GM12878 (cell line): ENCODE measurements at regions of chr13 and their contacts with region 1.

Region 1: GRCh38 chr13:27620377-27621115 is at the start of gene LNX2:
- DNase-seq: peak; percentile 80
- ATAC-seq: peak; percentile 94
- H3K4me3 ChIP-seq: peak within 1 kb of the TSS; percentile 97
- H3K27ac ChIP-seq: peak within 1 kb of the TSS; percentile 84
- H3K4me1 ChIP-seq: peaks cover 8% of the 10 kb centered on the region
- H3K27me3 ChIP-seq: no peaks in the 10 kb centered on the region
- CTCF ChIP-seq: no peak
- EP300 ChIP-seq: no peak
- POLR2A ChIP-seq: peak; percentile 90
- RAD21 ChIP-seq: no peak
- polyA plus RNA-seq, gene LNX2: 1.3 to 1.9 TPM

Region 2: DNA sequence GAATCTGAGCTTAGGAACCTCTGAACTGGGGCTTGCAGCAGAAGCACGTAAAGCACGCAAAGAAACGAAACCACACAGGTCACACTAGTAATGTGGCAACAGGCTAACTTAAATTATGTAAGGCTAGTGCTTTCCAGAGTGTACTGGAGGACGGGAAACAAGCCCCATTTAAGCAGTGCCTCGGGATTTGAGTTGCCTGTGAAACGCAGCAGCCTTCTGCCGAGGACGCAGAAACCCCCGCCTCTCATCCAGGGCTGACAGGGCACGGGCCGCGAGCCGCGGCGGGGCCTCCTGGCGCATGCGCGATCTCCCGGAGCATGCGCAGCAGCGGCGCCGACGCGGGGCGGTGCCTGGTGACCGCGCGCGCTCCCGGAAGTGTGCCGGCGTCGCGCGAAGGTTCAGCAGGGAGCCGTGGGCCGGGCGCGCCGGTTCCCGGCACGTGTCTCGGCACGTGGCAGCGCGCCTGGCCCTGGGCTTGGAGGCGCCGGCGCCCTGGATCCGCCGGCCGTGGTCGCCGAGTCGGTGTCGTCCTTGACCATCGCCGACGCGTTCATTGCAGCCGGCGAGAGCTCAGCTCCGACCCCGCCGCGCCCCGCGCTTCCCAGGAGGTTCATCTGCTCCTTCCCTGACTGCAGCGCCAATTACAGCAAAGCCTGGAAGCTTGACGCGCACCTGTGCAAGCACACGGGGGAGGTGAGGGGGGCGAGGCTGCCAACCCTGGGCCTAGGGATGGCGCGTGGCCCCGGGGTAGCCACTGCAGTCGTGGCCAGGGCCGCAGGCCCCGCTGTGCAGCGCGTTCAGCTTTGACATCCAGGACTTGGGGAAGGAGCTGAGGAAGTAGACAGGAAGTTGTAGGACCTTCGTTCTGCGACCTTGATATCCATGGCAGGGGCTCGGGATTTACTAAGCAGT is 196.0 kb before region 1 on chr13 and contains the start of gene GTF3A:
- CTCF ChIA-PET with region 1: interaction called, 3 read pairs
- POLR2A ChIA-PET with region 1: interaction called, 3 read pairs
- RAD21 ChIA-PET with region 1: interaction called, 6 read pairs
- SMC1A ChIA-PET with region 1: no interaction called
- in situ Hi-C with region 1: no loop called
- intact Hi-C with region 1: loop called (anchors 5 kb)
- DNase-seq: peak; percentile 71
- ATAC-seq: peak; percentile 83
- H3K4me3 ChIP-seq: peak within 1 kb of the TSS; percentile 68
- H3K27ac ChIP-seq: peak within 1 kb of the TSS; percentile 81
- H3K4me1 ChIP-seq: peaks cover 12% of the 10 kb centered on the region
- H3K27me3 ChIP-seq: no peaks in the 10 kb centered on the region
- CTCF ChIP-seq: no peak
- EP300 ChIP-seq: no peak
- POLR2A ChIP-seq: peak; percentile 91
- RAD21 ChIP-seq: no peak
- polyA plus RNA-seq, gene GTF3A: 74.2 to 187 TPM

Region 3: GRCh38 chr13:27556109-27556508 is 64.4 kb before region 1 on chr13:
- CTCF ChIA-PET with region 1: interaction called, 6 read pairs
- POLR2A ChIA-PET with region 1: interaction called, 3 read pairs
- RAD21 ChIA-PET with region 1: interaction called, 14 read pairs
- SMC1A ChIA-PET with region 1: interaction called, 8 read pairs
- in situ Hi-C with region 1: no loop called
- intact Hi-C with region 1: no loop called
- DNase-seq: no peak
- ATAC-seq: no peak
- H3K4me3 ChIP-seq: no peak overlapping the region
- H3K27ac ChIP-seq: no peak overlapping the region
- H3K4me1 ChIP-seq: no peaks in the 10 kb centered on the region
- H3K27me3 ChIP-seq: no peaks in the 10 kb centered on the region
- CTCF ChIP-seq: peak in 1 of 3 experiments; percentile 27; a peak in 2 of 6 replicates
- EP300 ChIP-seq: no peak
- POLR2A ChIP-seq: no peak
- RAD21 ChIP-seq: peak; percentile 38; the same call in 1 of the 2 replicates

Region 4: DNA sequence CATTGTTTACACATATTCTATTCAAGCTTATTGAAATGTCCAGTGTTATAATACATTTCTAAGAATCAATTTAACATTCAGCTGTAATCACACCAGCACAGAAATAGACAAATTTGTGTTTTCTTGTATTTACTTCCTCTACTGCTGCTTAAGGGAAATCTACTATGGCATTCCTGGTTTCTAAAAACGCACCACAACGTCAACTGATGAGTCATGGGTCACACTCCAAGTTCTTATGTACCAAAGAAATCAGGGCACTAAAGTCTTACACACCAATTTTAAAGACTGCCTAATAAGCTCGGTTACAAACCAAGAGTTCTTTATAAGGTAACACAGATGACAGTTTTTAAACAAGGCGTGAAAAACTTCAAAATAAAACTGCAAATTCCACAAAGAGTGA is 13.4 kb before region 1 on chr13:
- CTCF ChIA-PET with region 1: interaction called, 27 read pairs
- POLR2A ChIA-PET with region 1: interaction called, 55 read pairs
- RAD21 ChIA-PET with region 1: interaction called, 33 read pairs
- SMC1A ChIA-PET with region 1: interaction called, 35 read pairs
- in situ Hi-C with region 1: no loop called
- intact Hi-C with region 1: no loop called
- DNase-seq: no peak
- ATAC-seq: no peak; the same call in 2 of the 3 replicates
- H3K4me3 ChIP-seq: no peak overlapping the region
- H3K27ac ChIP-seq: no peak overlapping the region
- H3K4me1 ChIP-seq: peaks cover 15% of the 10 kb centered on the region; the same call in 1 of the 2 replicates
- H3K27me3 ChIP-seq: no peaks in the 10 kb centered on the region
- CTCF ChIP-seq: no peak
- EP300 ChIP-seq: no peak
- POLR2A ChIP-seq: no peak
- RAD21 ChIP-seq: no peak